Left ventricle myocardium superior (tissue), 1 donor: ENCODE measurements at regions of chr5 and their contacts with region 1.

Region 1: DNA sequence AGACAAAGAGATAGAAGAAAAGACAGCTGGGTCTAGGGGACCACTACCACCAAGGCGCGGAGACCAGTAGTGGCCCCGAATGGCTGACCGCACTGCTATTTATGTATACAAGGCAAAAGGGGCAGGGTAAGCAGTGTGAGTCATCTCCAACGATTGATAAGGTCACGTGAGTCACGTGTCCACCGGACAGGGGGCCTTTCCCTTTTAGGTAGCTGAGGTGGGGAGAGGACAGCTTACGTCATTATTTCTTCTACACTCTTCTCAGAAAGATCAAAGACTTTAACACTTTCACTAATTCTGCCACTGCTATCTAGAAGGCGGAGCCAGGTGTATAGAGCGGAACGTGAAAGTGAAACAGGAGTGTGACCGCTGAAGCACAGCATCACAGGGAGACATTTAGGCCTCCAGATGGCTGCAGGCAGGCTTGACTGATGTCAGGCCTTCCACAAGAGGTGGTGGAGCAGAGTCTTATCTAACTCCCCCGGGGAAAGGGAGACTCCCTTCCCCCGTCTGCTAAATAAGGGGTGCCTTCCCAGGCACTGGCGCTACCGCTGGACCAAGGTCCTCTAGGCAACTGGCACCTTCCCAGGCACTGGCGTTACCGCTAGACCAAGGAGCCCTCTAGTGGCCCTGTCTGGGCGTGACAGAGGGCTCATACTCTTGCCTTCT is 6.1 kb upstream of the PRR16 start:
- DNase-seq: peak; percentile 90
- ATAC-seq: peak; percentile 73

Region 2: GRCh38 chr5:119951330-119951934 is 506.5 kb before region 1 on chr5:
- intact Hi-C with region 1: loop called (anchors 5 kb)
- DNase-seq: no peak
- ATAC-seq: no peak